ENCODE measurements at regions of chr10 and their contacts with region 1.

Region 1: DNA sequence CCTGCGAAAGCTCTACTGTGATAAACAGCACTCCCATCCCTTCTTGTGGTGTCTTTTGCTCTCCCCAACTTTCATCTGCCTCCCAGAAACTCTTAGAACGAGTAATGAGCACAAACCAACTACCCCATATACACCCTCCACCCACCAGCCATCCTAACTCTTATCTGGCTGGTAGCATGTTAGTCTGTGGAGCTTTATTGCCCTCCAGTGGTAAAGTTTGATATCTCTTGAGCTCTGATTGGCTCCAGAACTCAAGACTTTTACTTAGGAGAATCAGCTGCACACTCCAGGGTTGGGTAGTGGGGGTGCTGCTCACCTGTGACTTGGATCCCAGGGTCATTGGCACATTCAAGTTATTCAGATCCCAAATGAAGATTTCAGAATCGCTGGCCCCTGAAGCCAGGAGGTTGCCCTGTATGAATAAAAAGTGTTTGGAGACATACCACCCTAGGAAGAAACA is 10.9 kb downstream of the SEC31B start:
- DNase-seq: peak; percentile 48
- ATAC-seq: peak; percentile 51
- H3K4me3 Mint-ChIP-seq: peak overlapping the region; percentile 87
- H3K27ac Mint-ChIP-seq: peak overlapping the region; percentile 97
- H3K4me1 Mint-ChIP-seq: peaks cover 88% of the 10 kb centered on the region
- H3K27me3 Mint-ChIP-seq: no peaks in the 10 kb centered on the region

Region 2: GRCh38 chr10:100373298-100374136 is 135.2 kb before region 1 on chr10:
- POLR2A ChIA-PET with region 1: interaction called, 34 read pairs
- DNase-seq: peak; percentile 88
- ATAC-seq: peak; percentile 87
- H3K4me3 Mint-ChIP-seq: no peak overlapping the region
- H3K27ac Mint-ChIP-seq: no peak overlapping the region
- H3K4me1 Mint-ChIP-seq: peaks cover 35% of the 10 kb centered on the region
- H3K27me3 Mint-ChIP-seq: no peaks in the 10 kb centered on the region

Region 3: GRCh38 chr10:100496567-100496966 is 12.2 kb before region 1 on chr10:
- POLR2A ChIA-PET with region 1: interaction called, 74 read pairs
- DNase-seq: no peak
- ATAC-seq: no peak
- H3K4me3 Mint-ChIP-seq: peak overlapping the region; percentile 3
- H3K27ac Mint-ChIP-seq: peak overlapping the region; percentile 68
- H3K4me1 Mint-ChIP-seq: peaks cover 57% of the 10 kb centered on the region
- H3K27me3 Mint-ChIP-seq: no peaks in the 10 kb centered on the region

Region 4: DNA sequence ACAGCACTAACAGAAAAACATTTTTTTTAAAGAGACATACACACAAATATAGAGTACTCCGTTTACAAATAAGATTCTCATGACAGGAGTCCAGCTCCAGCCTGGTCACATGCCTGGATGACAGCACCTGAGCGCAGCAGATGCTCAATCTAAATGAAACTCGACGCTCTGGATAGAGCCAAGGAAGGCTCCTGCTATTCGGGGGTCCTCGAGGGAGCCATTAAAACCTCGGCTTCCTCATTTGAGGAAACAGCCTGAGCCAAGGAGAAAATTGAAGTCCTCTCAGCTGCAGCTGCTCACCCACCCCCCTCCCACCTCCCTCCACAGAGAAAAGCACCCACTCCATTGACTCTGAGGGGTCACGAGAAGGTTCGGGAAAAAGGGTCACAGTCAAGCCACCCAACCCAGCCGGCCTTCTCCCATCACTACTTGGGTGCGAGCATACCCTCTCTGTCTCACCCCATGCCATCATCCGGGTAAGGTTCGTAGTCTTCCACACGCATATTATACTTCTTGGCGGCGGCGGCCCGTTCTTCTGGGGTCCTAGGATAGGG is 20.3 kb after region 1 on chr10:
- POLR2A ChIA-PET with region 1: interaction called, 12 read pairs
- DNase-seq: no peak
- ATAC-seq: no peak
- H3K4me3 Mint-ChIP-seq: peak overlapping the region; percentile 100
- H3K27ac Mint-ChIP-seq: peak overlapping the region; percentile 94
- H3K4me1 Mint-ChIP-seq: peaks cover 35% of the 10 kb centered on the region
- H3K27me3 Mint-ChIP-seq: no peaks in the 10 kb centered on the region

Region 5: DNA sequence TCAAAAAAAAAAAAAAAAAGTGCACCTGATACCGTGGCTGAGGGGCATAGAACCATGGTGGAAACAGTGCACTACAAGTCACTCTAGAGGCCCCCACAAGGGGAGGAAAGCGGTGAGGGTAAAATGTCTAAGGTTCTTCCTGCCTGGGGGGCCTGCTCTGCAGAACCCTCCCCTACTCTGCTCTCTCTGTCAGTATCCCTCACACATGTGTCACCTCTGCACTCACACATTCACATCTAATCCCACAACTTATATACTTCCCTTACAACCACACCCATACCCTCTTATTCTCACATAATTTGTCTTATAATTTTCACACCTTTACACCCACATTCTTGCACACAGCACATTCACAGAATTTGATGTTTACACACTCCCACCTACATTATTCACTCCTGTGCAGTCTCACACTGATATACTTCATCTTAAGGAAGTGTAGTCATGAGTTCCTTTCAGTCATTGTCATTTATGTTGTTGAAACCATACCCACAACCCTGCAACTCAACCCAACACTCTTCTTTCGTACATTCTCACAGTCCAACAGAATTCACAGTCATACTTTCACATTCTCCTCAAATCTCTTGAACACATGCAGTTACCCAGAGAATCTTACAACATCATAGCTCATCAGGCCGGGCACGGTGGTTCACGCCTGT is 168.7 kb after region 1 on chr10:
- POLR2A ChIA-PET with region 1: no interaction called
- DNase-seq: no peak
- ATAC-seq: no peak
- H3K4me3 Mint-ChIP-seq: no peak overlapping the region
- H3K27ac Mint-ChIP-seq: no peak overlapping the region
- H3K4me1 Mint-ChIP-seq: peaks cover 2% of the 10 kb centered on the region
- H3K27me3 Mint-ChIP-seq: peaks cover 62% of the 10 kb centered on the region

Measured in activated naive CD8-positive, alpha-beta T cell treated with anti-CD3 and anti-CD28 coated beads, Interleukin-2, amount 10 ng/mL, durations not matched to agents 7 days and 5 days (primary cell).